IMR-90 (cell line): ENCODE measurements at regions of chr4 and their contacts with region 1.

Region 1: GRCh38 chr4:159077702-159078495 is 25.0 kb upstream of the RAPGEF2 start:
- DNase-seq: peak; percentile 11
- ATAC-seq: no peak
- H3K4me3 ChIP-seq: no peak overlapping the region
- H3K27ac ChIP-seq: no peak overlapping the region
- H3K4me1 ChIP-seq: no peaks in the 10 kb centered on the region
- H3K27me3 ChIP-seq: no peaks in the 10 kb centered on the region
- CTCF ChIP-seq: no peak
- POLR2A ChIP-seq: no peak
- RAD21 ChIP-seq: no peak

Region 2: DNA sequence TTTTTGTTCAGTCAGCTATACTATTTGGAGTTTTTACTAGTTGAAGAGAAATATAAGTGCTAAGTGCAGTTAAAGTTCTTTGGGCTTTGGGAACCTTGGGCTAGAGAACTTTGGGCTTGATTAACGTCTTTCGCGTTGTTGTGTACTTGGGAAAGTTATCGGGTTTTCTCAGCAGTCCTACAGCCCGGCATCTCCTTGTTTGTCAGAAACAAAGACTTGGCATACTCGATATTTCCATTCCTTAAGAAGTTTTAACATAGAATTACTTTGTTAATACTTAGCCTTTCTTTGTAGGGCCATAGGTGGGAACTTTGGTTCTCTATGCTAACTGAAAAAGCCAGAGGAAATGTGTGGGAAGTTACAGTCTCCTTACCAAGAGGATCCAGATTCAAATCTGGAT is 53.7 kb after region 1 on chr4:
- CTCF ChIA-PET with region 1: no interaction called
- POLR2A ChIA-PET with region 1: interaction called, 10 read pairs
- dilution Hi-C with region 1: no loop called
- in situ Hi-C with region 1: no loop called
- intact Hi-C with region 1: no loop called
- DNase-seq: no peak
- ATAC-seq: no peak
- H3K4me3 ChIP-seq: no peak overlapping the region
- H3K27ac ChIP-seq: no peak overlapping the region
- H3K4me1 ChIP-seq: no peaks in the 10 kb centered on the region
- H3K27me3 ChIP-seq: no peaks in the 10 kb centered on the region
- CTCF ChIP-seq: no peak
- POLR2A ChIP-seq: no peak
- RAD21 ChIP-seq: no peak